ENCODE measurements at regions of chr5 and their contacts with region 1.

Region 1: GRCh38 chr5:37658440-37658839 is 181.4 kb downstream of the GDNF start:
- DNase-seq: no peak
- H3K4me3 ChIP-seq: no peak overlapping the region
- H3K27ac ChIP-seq: no peak overlapping the region
- H3K4me1 ChIP-seq: peaks cover 4% of the 10 kb centered on the region
- H3K27me3 ChIP-seq: no peaks in the 10 kb centered on the region
- CTCF ChIP-seq: no peak
- POLR2A ChIP-seq: no peak

Region 2: DNA sequence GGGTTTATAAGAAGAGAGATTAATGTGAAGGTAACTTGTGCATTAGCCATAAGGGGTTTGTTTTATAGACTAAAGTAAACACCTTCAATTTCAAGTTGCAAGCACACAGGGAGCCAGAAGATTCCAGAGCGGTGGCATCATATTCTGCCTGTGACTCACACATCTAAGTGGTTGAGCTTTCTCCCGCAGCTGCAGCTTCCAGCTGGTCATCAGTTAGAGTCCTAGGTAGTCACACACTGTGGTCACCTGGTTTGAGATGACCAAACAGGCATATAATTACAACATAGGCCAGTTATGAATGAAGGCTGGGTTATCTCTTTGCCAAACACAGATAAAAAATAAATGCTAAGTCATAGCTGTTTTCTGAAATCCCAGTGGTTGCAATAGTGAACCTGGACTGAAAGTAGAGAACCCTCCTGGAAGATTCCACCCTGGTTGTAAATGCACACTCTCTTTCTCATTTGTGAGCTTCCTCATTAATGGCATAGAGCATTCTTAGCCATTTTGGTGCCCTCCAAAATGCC is 10.1 kb after region 1 on chr5:
- CTCF ChIA-PET with region 1: interaction called, 3 read pairs
- POLR2A ChIA-PET with region 1: no interaction called
- dilution Hi-C with region 1: no loop called
- intact Hi-C with region 1: loop called (anchors 1 kb)
- DNase-seq: peak; percentile 88
- H3K4me3 ChIP-seq: no peak overlapping the region
- H3K27ac ChIP-seq: peak overlapping the region; percentile 41
- H3K4me1 ChIP-seq: peaks cover 19% of the 10 kb centered on the region
- H3K27me3 ChIP-seq: no peaks in the 10 kb centered on the region
- CTCF ChIP-seq: no peak
- POLR2A ChIP-seq: no peak

Region 3: DNA sequence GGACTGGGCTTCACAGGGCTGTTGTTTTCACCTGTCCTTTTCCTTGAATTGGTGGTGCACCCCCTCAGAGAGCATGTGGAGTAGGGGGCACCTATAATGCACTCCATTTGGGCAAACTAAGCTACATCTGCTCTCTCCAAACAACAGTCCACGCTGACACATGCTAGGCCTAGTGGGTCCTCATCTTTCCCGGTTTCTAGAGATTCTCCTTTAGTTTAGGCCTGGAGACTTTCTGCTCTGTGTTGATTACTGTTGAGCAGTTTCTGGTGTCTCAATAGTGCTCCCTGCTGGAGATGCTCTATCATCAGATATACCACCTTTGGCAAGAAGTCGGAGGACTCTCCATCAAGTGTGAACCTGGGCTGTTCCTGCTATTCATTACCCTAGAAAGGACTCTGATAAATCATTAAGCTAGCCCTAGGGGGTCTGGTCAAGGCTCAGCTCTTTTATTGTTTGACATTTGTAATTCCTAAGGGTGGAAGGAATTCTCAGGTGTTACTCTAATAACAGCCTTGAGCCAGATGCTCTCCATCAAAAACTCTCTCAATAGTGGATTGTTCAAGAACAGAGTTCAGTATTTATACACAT is 1624.9 kb after region 1 on chr5:
- CTCF ChIA-PET with region 1: no interaction called
- POLR2A ChIA-PET with region 1: no interaction called
- dilution Hi-C with region 1: no loop called
- intact Hi-C with region 1: no loop called
- DNase-seq: peak; percentile 76
- H3K4me3 ChIP-seq: no peak overlapping the region
- H3K27ac ChIP-seq: no peak overlapping the region
- H3K4me1 ChIP-seq: no peaks in the 10 kb centered on the region
- H3K27me3 ChIP-seq: no peaks in the 10 kb centered on the region
- CTCF ChIP-seq: peak; percentile 50 to 67
- POLR2A ChIP-seq: no peak

Measured in endothelial cell of umbilical vein (primary cell).